ENCODE measurements at regions of chr10 and their contacts with region 1.

Region 1: GRCh38 chr10:75910032-75910431 is 478.6 kb downstream of the LRMDA start:
- DNase-seq: no peak
- ATAC-seq: no peak

Region 2: GRCh38 chr10:75593692-75594556 is 316.1 kb before region 1 on chr10:
- intact Hi-C with region 1: loop called (anchors 10 kb)
- DNase-seq: no peak
- ATAC-seq: no peak

Region 3: GRCh38 chr10:76036111-76036940 is 126.3 kb after region 1 on chr10:
- intact Hi-C with region 1: loop called (anchors 10 kb)
- DNase-seq: peak; percentile 76
- ATAC-seq: peak; percentile 90